HEK293T (cell line): ENCODE measurements at regions of chr1 and their contacts with region 1.

Region 1: GRCh38 chr1:93061895-93062792 is 16.9 kb upstream of the MTF2 start:
- DNase-seq: peak; percentile 56

Region 2: GRCh38 chr1:93023281-93023680 is 38.9 kb before region 1 on chr1:
- CTCF ChIA-PET with region 1: interaction called, 15 read pairs
- POLR2A ChIA-PET with region 1: no interaction called
- DNase-seq: no peak